ENCODE measurements at regions of chr13 and their contacts with region 1.

Region 1: GRCh38 chr13:109145631-109146030 is 516.2 kb downstream of the MYO16 start:
- DNase-seq: no peak
- ATAC-seq: peak; percentile 87 to 88

Region 2: GRCh38 chr13:108508263-108508662 is 637.4 kb before region 1 on chr13:
- intact Hi-C with region 1: no loop called
- DNase-seq: no peak
- ATAC-seq: no peak

Region 3: DNA sequence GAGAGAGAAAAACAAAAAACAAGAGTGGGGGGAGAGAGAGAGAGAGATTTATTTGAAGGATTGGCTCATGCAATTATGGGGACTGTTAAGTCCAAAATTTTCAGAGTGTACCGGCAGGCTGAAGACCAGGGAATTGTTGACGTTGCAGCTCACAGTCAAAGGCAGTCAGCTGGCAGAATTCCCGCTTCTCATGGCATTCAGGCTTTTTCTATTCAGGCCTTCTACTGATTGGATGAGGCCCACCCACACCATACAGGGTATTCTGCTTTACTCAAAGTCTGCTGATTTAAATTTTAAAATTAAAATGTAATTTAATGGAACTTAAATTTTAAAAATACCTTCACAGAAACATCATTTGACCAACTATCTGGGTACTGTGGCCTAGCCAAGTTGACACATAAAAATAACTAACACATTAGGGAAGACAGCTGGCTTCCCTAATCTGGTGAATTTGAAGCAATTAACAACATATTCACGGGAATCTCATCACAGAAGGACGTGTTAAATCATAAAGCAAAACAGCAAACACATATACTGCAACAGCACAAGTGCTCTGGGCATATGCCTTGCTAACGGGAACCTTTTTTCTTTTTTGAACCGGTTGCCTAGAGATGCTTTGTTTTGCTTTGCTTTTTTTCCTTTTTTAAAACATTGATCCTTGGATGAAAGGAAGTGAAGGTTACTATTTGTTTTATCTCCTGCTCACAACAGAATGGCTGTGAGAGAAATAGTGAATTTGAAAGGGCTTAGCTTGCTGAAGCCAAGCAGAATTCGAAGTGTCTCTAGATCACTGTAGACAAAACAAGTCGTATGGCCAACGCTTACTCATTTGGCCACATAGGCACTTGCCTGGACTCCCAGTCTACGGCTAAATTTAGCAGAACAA is 135.6 kb after region 1 on chr13:
- intact Hi-C with region 1: loop called in 1 of 2 experiments (anchors 10 kb)
- DNase-seq: no peak
- ATAC-seq: peak in 1 of 2 donors; percentile 76

Region 4: DNA sequence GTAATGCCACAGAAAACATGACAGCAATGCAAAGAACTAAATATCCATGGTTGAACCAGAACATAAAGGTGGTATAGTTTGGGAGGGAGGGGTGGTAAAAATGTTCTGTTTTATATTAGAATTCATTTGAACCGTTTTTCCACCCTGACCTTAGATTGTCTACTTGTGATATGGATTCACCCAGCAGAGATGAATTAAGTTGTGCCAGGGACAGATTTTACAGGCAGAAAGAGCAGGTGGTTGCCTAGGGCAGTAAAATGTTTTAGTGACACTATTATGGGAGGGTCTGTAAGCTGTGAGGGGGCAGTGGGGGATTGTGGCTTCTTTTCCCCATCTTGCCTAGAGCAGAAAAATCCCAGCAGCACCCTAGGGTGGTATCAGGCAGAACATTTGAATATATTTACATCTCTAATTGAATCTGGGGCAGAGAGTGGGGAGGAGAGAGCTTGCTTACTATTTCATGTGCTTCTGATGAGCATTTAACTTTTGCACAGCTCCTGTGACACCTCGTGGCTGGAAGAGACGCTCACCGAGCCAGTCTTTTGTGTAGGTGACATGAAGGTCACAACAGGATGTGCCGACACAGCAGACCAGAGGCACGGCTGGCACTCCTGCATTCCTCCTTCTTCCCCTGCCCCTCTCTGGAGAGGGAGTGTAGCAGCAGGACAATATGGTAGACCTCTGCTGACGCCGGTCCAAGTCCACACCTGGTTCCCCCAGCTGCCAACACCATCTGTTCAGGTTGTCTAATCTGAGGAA is 188.4 kb after region 1 on chr13:
- intact Hi-C with region 1: loop called in 1 of 2 experiments (anchors 2 kb)
- DNase-seq: no peak
- ATAC-seq: peak; percentile 56 to 74

Region 5: GRCh38 chr13:109786457-109787134 is 641.0 kb after region 1 on chr13 and contains the start of gene IRS2:
- intact Hi-C with region 1: loop called (anchors 10 kb)
- DNase-seq: peak; percentile 94
- ATAC-seq: peak; percentile 83 to 86
- total RNA-seq, gene IRS2: 27.9 to 29.6 TPM

Region 6: GRCh38 chr13:110126391-110126961 is 980.8 kb after region 1 on chr13:
- intact Hi-C with region 1: loop called in 1 of 2 experiments (anchors 10 kb)
- DNase-seq: peak; percentile 71
- ATAC-seq: peak; percentile 78 to 88